T-cell (primary cell): ENCODE measurements at regions of chr4 and their contacts with region 1.

Region 1: DNA sequence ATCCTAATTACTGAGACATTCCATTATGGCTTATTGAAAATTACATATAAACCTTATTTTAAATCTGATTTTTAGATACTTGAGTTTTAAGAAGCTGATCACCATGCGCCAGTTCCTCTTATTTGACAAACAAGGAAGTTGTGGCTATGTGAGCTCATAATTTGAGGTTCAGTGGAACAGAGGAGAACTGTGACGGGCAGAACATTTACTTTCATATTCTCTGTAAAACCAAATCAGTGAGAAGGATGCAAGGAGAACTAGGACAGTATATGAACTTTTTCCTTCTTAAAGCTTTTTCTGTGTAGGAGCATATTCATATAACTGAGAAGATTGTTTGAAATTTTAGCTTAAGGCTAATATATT is 25.3 kb downstream of the STIM2 start:
- DNase-seq: peak in 24 of 35 experiments; percentile 7 to 83 (median 38)
- ATAC-seq: peak; percentile 66 to 78 (median 74)
- H3K4me3 ChIP-seq: peak overlapping the region; percentile 15 to 32
- H3K4me3 Mint-ChIP-seq: peak overlapping the region; percentile 69 to 77 (median 75)
- H3K27ac ChIP-seq: peak overlapping the region; percentile 97
- H3K27ac Mint-ChIP-seq: peak overlapping the region; percentile 95 to 98
- H3K4me1 ChIP-seq: peaks cover 21 to 51% of the 10 kb centered on the region in 2 experiments
- H3K4me1 Mint-ChIP-seq: peaks cover 83 to 86% (median 84%) of the 10 kb centered on the region in 3 donors
- H3K27me3 ChIP-seq: no peaks in the 10 kb centered on the region
- H3K27me3 Mint-ChIP-seq: no peaks in the 10 kb centered on the region

Region 2: DNA sequence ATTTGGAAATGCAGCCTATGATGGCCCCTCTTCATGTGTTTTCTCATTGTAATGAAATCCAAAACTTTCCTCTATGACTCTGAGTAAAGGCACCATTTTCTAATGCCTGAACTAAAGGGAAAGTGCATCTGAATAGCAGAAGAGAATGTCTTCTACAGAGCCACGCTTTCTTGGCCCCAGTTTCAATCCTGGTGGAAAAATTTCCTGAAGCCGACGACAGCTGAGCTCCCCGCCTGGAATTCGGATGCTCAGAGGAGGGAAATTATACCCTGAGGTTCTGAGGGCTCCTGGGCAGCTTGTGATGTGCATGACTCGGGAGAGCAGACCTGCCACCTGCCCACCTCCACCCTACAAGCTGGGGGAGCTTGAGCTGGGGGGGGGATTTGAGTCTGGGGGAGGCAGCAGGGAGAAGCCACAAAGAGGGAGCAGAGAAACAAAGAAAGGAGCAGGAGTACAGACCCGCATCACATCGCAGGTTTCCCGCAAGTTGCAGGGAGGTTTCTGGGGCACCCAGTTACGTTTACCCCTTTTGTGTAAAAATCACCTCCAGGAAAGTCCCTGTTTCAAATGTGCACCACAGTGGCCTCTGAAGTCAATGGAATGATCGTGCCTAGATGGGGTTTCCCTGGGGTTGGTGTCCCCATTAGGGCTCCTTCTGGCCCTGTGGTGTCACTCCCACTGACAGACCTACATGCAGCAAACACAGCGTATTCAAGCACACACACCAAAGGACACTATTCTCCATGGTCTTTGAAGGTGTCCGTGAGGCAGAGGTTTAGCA is 710.7 kb before region 1 on chr4:
- CTCF ChIA-PET with region 1: no interaction called
- POLR2A ChIA-PET with region 1: interaction called in 1 of 2 experiments, 15 read pairs
- DNase-seq: peak in 21 of 35 experiments; percentile 2 to 61 (median 12)
- ATAC-seq: peak in 2 of 4 experiments; percentile 20 to 77
- H3K4me3 ChIP-seq: no peak overlapping the region
- H3K4me3 Mint-ChIP-seq: no peak overlapping the region
- H3K27ac ChIP-seq: no peak overlapping the region
- H3K27ac Mint-ChIP-seq: no peak overlapping the region
- H3K4me1 ChIP-seq: peaks cover 0 to 6% of the 10 kb centered on the region in 2 experiments
- H3K4me1 Mint-ChIP-seq: peaks cover 0 to 18% (median 0%) of the 10 kb centered on the region in 3 donors
- H3K27me3 ChIP-seq: peaks cover 0 to 5% of the 10 kb centered on the region in 2 experiments
- H3K27me3 Mint-ChIP-seq: peaks cover 4 to 8% of the 10 kb centered on the region in 2 donors

Region 3: DNA sequence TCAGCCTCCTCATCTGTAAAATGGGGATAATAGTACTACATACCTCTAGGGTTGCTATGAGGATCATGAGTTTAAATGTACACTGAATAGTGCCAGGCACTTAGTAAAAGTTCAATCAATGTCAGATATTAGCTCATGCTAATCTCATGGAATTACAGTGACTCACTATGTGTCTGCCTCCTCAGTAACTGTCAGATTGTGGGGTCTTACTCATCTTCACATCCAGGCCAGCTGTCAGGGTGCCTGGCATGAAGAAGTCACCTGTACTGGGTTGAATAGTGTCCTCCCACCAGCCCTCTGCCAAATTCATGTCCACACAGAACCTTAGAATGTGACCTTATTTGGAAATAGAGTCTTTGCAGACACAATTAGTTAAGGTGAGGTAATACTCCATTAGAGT is 79.6 kb before region 1 on chr4:
- CTCF ChIA-PET with region 1: no interaction called
- POLR2A ChIA-PET with region 1: interaction called in 1 of 2 experiments, 11 read pairs
- DNase-seq: no peak
- ATAC-seq: no peak
- H3K4me3 ChIP-seq: no peak overlapping the region
- H3K4me3 Mint-ChIP-seq: no peak overlapping the region
- H3K27ac ChIP-seq: no peak overlapping the region
- H3K27ac Mint-ChIP-seq: no peak overlapping the region
- H3K4me1 ChIP-seq: peaks cover 0 to 2% of the 10 kb centered on the region in 2 experiments
- H3K4me1 Mint-ChIP-seq: peaks cover 4 to 5% (median 5%) of the 10 kb centered on the region in 3 donors
- H3K27me3 ChIP-seq: no peaks in the 10 kb centered on the region
- H3K27me3 Mint-ChIP-seq: no peaks in the 10 kb centered on the region

Region 4: GRCh38 chr4:26867914-26868684 is 17.8 kb before region 1 on chr4:
- CTCF ChIA-PET with region 1: interaction called, 5 to 40 read pairs
- POLR2A ChIA-PET with region 1: interaction called, 6 to 76 read pairs
- DNase-seq: no peak
- ATAC-seq: peak in 1 of 4 experiments; percentile 22
- H3K4me3 ChIP-seq: no peak overlapping the region
- H3K4me3 Mint-ChIP-seq: peak overlapping the region; percentile 4 to 56 (median 48)
- H3K27ac ChIP-seq: peak overlapping the region; percentile 32
- H3K27ac Mint-ChIP-seq: peak overlapping the region; percentile 30 to 41
- H3K4me1 ChIP-seq: peaks cover 19 to 57% of the 10 kb centered on the region in 2 experiments
- H3K4me1 Mint-ChIP-seq: peaks cover 84 to 91% (median 88%) of the 10 kb centered on the region in 3 donors
- H3K27me3 ChIP-seq: no peaks in the 10 kb centered on the region
- H3K27me3 Mint-ChIP-seq: no peaks in the 10 kb centered on the region

Region 5: DNA sequence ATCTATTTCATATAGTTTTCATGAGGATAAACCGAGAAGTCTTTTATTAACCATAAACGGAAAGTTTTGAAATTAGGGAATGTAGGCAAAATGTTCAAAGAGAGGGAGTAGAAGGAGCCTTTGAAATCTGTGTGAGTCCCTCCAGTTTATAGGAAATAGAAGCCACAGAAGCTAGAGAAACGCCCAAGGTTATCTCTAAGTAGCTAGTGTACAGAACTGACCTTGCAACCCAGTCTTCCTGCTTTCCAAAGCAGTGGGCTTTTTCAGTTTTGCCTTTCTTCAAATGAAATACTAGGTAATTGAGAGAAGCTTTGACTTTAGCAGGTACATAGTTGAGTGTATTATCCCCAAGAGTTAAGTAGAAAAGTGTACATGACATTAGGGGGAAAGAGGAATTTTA is 14.1 kb after region 1 on chr4:
- CTCF ChIA-PET with region 1: interaction called in 1 of 2 experiments, 15 read pairs
- POLR2A ChIA-PET with region 1: interaction called, 7 to 9 read pairs
- DNase-seq: no peak
- ATAC-seq: peak in 2 of 4 experiments; percentile 27 to 43
- H3K4me3 ChIP-seq: no peak overlapping the region
- H3K4me3 Mint-ChIP-seq: peak overlapping the region in 1 of 3 donors; percentile 39
- H3K27ac ChIP-seq: no peak overlapping the region
- H3K27ac Mint-ChIP-seq: no peak overlapping the region
- H3K4me1 ChIP-seq: peaks cover 7 to 34% of the 10 kb centered on the region in 2 experiments
- H3K4me1 Mint-ChIP-seq: peaks cover 78 to 84% (median 81%) of the 10 kb centered on the region in 3 donors
- H3K27me3 ChIP-seq: no peaks in the 10 kb centered on the region
- H3K27me3 Mint-ChIP-seq: no peaks in the 10 kb centered on the region

Region 6: GRCh38 chr4:26953366-26953765 is 67.5 kb after region 1 on chr4:
- CTCF ChIA-PET with region 1: no interaction called
- POLR2A ChIA-PET with region 1: interaction called in 1 of 2 experiments, 10 read pairs
- DNase-seq: no peak
- ATAC-seq: no peak
- H3K4me3 ChIP-seq: no peak overlapping the region
- H3K4me3 Mint-ChIP-seq: no peak overlapping the region
- H3K27ac ChIP-seq: no peak overlapping the region
- H3K27ac Mint-ChIP-seq: peak overlapping the region in 1 of 2 donors; percentile 33
- H3K4me1 ChIP-seq: peaks cover 0 to 9% of the 10 kb centered on the region in 2 experiments
- H3K4me1 Mint-ChIP-seq: peaks cover 42 to 57% (median 54%) of the 10 kb centered on the region in 3 donors
- H3K27me3 ChIP-seq: no peaks in the 10 kb centered on the region
- H3K27me3 Mint-ChIP-seq: no peaks in the 10 kb centered on the region

Region 7: DNA sequence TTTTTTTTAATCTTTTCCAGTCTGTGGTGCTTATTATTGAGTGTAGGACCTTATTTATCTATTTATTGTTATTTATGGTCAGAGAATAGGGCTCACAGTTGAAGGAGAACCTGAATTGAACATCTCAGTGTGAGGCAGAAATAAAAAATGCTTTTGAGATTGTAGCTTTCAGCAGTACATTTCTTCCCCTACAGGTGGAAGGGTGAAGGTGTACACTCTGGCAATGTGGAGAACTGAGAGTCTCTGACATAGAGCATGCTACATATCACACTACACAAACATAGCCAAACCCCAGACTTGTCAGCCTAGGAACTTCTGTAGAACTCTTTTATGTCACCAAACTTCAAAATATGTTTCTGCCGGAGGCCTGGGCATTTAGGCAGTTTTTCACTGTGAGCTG is 114.9 kb after region 1 on chr4:
- CTCF ChIA-PET with region 1: interaction called, 3 to 10 read pairs
- POLR2A ChIA-PET with region 1: interaction called, 5 to 9 read pairs
- DNase-seq: peak in 5 of 35 experiments; percentile 6 to 52 (median 8)
- ATAC-seq: peak; percentile 66 to 87 (median 71)
- H3K4me3 ChIP-seq: no peak overlapping the region
- H3K4me3 Mint-ChIP-seq: no peak overlapping the region
- H3K27ac ChIP-seq: no peak overlapping the region
- H3K27ac Mint-ChIP-seq: peak overlapping the region in 1 of 2 donors; percentile 74
- H3K4me1 ChIP-seq: peaks cover 7 to 14% of the 10 kb centered on the region in 2 experiments
- H3K4me1 Mint-ChIP-seq: peaks cover 34 to 54% (median 49%) of the 10 kb centered on the region in 3 donors
- H3K27me3 ChIP-seq: no peaks in the 10 kb centered on the region
- H3K27me3 Mint-ChIP-seq: no peaks in the 10 kb centered on the region